Lower leg skin (tissue), 4 donors: ENCODE measurements at regions of chr4 and their contacts with region 1.

Region 1: GRCh38 chr4:40149960-40150385 is 46.9 kb upstream of the RHOH start:
- DNase-seq: peak in 1 of 2 donors; percentile 69
- H3K4me3 ChIP-seq: no peak overlapping the region
- CTCF ChIP-seq: peak in 1 of 3 donors; percentile 76
- POLR2A ChIP-seq: no peak

Region 2: GRCh38 chr4:38867478-38868058 is 1282.4 kb before region 1 on chr4 and contains the start of gene FAM114A1:
- intact Hi-C with region 1: no loop called
- DNase-seq: peak; percentile 64 to 94
- H3K4me3 ChIP-seq: peak within 1 kb of the TSS; percentile 55
- CTCF ChIP-seq: no peak
- POLR2A ChIP-seq: no peak
- total RNA-seq, gene FAM114A1: 49.8 to 71.0 (median 54.6) TPM

Region 3: GRCh38 chr4:40311811-40312346 is 161.9 kb after region 1 on chr4:
- intact Hi-C with region 1: loop called (anchors 5 kb)
- DNase-seq: peak in 1 of 2 donors; percentile 50
- H3K4me3 ChIP-seq: no peak overlapping the region
- CTCF ChIP-seq: no peak
- POLR2A ChIP-seq: no peak

Region 4: DNA sequence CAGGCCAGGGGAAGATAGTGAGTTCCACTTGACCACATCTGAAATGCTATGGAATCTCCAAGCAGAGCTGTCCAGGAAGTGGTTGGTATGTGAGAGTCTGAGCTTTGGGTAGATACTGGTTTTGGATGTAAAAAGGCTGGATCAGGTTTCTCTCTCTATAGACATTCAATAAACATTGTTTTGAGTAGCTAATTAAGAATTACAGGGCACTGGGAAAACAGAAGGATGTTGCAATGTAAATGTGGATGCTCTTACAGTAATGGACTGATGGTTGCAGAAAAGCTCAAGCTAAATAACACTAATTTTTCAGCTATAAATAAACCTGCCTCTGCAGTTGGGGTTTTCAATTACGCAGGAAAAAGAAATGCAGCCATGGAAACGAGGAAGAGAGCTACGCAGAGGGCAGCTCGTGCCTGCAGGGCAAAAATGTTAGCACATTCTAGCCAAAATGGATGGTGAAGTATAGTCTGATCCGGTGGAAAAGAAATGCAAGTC is 171.7 kb after region 1 on chr4:
- intact Hi-C with region 1: loop called (anchors 5 kb)
- DNase-seq: no peak
- H3K4me3 ChIP-seq: no peak overlapping the region
- CTCF ChIP-seq: no peak
- POLR2A ChIP-seq: no peak